ENCODE measurements at regions of chr13 and their contacts with region 1.

Region 1: GRCh38 chr13:41054212-41054877 is 7.0 kb upstream of the WBP4 start:
- DNase-seq: no peak
- ATAC-seq: peak; percentile 15 to 32
- H3K4me3 ChIP-seq: no peak overlapping the region
- H3K27ac ChIP-seq: peak overlapping the region; percentile 39
- H3K4me1 ChIP-seq: peaks cover 13% of the 10 kb centered on the region
- H3K27me3 ChIP-seq: no peaks in the 10 kb centered on the region

Region 2: DNA sequence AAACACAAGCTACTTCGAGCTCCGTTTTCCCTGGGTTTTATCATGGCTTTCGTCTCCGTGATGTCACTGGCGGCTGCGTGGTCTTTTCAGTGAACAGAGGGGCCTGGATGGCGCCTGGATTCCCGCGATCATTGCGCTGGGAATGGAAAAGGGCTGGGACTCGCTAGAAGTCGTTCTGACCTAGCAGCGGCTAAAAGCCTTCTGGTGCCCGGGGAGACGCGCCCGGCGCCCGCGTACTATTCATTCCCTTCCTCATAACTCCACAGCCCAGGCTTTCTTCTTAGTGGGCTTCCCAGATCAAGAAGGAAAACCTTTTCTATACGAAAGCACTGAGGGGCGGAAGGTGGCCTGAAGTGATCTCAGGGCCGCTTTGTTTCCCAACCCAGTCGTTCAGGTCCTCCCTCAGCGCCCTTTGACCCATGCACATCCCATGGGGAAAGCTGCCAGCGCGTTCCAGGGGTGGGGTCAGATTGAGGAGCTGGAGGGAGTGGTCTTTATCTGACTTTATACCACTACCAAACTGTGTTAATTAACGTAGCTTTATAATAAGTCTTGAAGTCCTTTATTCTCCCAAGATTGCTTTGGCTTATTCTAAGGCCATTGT is 131.8 kb before region 1 on chr13:
- intact Hi-C with region 1: loop called in 1 of 4 experiments (anchors 5 kb)
- DNase-seq: peak; percentile 41 to 69 (median 67)
- ATAC-seq: no peak
- H3K4me3 ChIP-seq: no peak overlapping the region
- H3K27ac ChIP-seq: no peak overlapping the region
- H3K4me1 ChIP-seq: peaks cover 2% of the 10 kb centered on the region
- H3K27me3 ChIP-seq: no peaks in the 10 kb centered on the region

Region 3: DNA sequence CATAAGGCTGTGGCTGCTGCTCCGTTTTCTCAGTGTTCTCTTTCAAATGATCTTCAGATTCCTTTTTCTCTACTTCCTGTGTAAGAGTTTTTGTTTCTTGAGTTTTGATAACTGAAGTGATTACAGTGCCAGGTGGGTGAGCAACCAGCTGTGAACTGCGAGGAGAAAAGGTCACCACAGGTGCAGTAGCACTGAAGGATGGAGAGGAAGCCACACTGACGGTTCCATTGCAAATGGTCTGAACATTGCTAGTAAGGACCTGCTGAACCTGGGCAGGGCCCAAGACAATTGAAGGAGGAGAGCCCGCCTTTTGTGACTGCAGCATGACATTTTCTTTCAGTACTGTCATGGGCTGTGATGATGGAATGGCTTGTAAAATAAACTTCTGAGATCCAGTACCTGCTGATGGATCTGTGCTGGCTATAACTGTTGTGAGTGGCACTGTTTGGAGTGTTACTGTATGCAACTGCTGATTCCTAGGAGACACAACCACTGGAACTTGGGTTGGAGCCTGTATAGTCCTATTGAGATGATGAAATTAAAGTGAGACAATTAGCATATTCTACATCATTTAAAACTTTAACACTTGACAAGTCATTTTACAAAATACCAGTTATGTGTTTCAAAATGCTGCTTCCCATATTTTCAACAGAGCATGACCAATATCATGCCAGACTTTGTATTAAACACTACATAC is 120.7 kb before region 1 on chr13:
- intact Hi-C with region 1: loop called in 1 of 4 experiments (anchors 10 kb)
- DNase-seq: no peak
- ATAC-seq: peak in 1 of 2 donors; percentile 21
- H3K4me3 ChIP-seq: no peak overlapping the region
- H3K27ac ChIP-seq: no peak overlapping the region
- H3K4me1 ChIP-seq: peaks cover 1% of the 10 kb centered on the region
- H3K27me3 ChIP-seq: no peaks in the 10 kb centered on the region

Region 4: DNA sequence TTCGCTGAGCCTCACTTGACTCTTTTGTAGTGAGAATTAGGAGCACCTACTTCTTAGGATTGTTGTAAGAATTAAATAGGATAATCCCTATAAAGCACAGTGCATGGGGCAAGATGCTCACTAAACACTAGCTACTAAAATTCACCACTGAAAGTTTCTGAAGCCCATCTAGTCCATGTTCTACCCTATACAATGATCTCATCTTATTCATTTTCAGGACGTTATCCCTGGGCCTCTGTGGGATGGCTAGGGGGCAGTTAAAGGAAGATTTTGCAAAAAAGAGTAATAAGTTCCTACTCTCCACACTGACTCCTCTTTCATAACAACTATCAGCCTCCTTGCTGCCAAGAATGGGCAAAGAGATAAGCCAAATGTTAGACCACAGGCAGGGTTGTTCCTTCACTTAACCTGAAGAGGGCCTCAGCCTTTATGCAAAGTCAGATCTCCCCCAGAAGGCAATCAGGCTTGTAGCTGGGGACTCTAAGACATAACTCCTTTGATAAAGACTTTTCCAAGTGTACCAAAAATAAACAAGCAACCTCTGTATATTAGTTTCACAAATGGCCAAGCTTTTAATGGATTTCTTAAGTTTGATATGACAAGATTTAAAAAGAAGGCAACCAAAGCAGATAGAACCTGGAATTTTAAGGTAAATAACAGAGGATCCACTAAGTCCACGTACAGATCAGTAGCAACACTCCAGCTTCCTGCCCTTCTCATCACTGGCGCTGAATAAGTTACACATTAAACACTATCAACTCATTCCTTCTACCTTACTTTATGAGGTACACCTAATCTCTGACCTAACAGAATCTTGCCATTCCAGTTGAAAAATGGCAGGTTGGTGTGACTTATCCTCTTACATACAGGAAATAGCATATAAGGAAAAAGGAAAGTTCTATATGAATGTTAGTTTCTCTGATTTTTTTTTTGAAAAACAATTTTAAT is 79.6 kb before region 1 on chr13:
- intact Hi-C with region 1: loop called in 2 of 4 experiments (anchors 10 kb)
- DNase-seq: no peak
- ATAC-seq: peak; percentile 69 to 72
- H3K4me3 ChIP-seq: no peak overlapping the region
- H3K27ac ChIP-seq: no peak overlapping the region
- H3K4me1 ChIP-seq: peaks cover 8% of the 10 kb centered on the region
- H3K27me3 ChIP-seq: no peaks in the 10 kb centered on the region

Region 5: GRCh38 chr13:41310963-41311606 is 256.7 kb after region 1 on chr13 and contains the start of gene NAA16:
- intact Hi-C with region 1: no loop called
- DNase-seq: peak; percentile 92 to 98 (median 97)
- ATAC-seq: peak; percentile 95 to 96
- H3K4me3 ChIP-seq: peak within 1 kb of the TSS; percentile 90
- H3K27ac ChIP-seq: peak within 1 kb of the TSS; percentile 92
- H3K4me1 ChIP-seq: peaks cover 8% of the 10 kb centered on the region
- H3K27me3 ChIP-seq: no peaks in the 10 kb centered on the region
- total RNA-seq, gene NAA16: 10.3 to 14.2 (median 13.4) TPM